AG04450 (cell line): ENCODE measurements at regions of chr3 and their contacts with region 1.

Region 1: DNA sequence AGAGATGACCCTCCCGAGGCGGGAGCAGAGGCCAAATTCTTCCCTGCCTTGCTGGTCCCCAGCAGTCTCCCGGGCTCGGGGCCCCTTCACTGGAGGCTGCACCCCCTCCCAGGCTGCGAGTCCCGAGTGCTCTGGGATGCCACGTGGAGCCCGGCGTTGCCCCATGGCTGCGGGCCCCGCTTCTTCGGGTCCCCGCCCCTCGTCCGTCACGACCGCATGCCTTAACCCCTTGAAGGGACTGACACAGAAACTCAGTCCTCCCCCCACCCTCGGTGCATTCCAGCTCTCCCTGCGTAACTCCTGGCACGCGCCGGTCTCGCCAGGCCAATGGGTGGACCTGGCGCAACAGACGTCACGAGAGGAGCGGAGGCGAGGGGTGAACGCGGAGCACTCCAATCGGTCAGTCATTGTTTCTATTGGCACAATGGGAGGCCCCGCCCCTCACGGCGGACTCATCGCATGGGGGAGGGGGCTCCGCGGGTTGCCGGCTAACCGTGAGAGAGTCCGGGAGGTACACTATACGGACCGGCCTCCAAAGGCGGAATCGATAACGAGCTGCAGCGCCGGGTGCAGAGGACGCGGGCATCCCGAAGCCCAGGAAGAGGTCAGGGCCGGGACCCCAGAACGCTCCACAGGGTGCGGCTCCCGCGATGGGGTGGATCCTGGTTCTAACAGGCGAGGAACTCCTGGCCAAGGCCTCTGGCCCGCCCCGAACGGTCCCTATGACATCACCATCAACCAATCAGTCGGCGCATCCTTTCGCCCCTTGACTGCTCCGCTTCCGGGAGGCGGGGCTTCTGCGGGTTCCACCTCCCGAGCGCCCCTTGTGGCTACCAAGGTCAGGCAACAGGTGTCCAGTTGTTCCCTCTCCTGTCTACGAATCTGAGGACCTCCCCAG is 978 bp upstream of the CELSR3 start:
- DNase-seq: peak; percentile 98
- H3K4me3 ChIP-seq: peak overlapping the region; percentile 66
- H3K27ac ChIP-seq: peak overlapping the region; percentile 98
- H3K27me3 ChIP-seq: peaks cover 9% of the 10 kb centered on the region
- CTCF ChIP-seq: peak; percentile 74

Region 2: GRCh38 chr3:46705022-46705530 is 1958.6 kb before region 1 on chr3:
- CTCF ChIA-PET with region 1: no interaction called
- POLR2A ChIA-PET with region 1: no interaction called
- DNase-seq: peak; percentile 26
- H3K4me3 ChIP-seq: no peak overlapping the region
- H3K27ac ChIP-seq: no peak overlapping the region
- H3K27me3 ChIP-seq: peaks cover 47% of the 10 kb centered on the region
- CTCF ChIP-seq: peak; percentile 96

Region 3: DNA sequence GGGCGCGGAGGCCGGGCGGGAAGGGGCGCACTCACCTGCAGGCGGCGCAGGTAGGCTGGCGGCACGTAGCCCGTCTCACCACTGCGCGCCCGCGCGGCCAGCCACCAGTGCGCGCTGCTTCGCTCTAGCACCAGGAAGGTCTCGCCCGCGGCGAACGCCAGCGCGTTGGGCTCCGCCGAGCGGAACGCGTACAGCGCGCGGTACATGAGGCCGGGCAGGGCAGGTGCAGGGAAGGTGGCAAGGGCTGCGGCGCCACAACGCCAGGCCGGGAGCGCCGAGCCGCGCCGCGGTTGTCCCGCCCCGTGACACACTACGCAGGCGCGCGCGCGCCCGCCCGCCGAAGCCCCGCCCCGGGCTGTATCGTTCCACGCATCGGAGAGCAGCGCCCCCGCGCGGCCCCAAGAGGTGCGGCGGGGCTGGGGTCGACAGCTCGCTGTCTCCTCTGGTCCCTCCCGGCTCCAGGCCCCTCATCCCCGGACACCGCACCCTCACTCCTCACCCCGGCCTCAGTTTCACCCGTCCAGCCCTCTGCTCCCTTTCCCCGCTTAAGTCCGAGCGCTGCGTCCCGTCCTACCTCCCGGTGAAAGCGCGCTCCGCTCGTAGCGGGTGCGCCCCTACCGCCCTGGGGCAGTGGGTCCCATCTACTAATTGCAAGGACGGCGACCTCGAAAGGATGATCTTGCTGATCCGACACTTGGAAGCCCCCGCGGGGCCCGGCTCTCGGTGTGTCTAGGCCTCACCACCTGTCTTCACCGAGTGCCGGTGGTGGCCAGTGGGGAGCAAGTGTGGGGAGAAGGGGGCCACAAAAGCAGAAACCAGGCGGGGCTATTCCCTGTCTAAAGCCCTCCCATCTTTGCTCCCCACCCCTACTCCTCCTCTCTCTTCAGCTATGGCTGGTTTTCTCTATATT is 22.2 kb after region 1 on chr3 and contains the start of gene NCKIPSD:
- CTCF ChIA-PET with region 1: interaction called, 10 read pairs
- POLR2A ChIA-PET with region 1: interaction called, 6 read pairs
- DNase-seq: no peak
- H3K4me3 ChIP-seq: peak within 1 kb of the TSS; percentile 94
- H3K27ac ChIP-seq: peak within 1 kb of the TSS; percentile 21
- H3K27me3 ChIP-seq: no peaks in the 10 kb centered on the region
- CTCF ChIP-seq: peak; percentile 71
- polyA plus RNA-seq, gene NCKIPSD: 25.4 and 36.3 TPM in 2 replicates

Region 4: DNA sequence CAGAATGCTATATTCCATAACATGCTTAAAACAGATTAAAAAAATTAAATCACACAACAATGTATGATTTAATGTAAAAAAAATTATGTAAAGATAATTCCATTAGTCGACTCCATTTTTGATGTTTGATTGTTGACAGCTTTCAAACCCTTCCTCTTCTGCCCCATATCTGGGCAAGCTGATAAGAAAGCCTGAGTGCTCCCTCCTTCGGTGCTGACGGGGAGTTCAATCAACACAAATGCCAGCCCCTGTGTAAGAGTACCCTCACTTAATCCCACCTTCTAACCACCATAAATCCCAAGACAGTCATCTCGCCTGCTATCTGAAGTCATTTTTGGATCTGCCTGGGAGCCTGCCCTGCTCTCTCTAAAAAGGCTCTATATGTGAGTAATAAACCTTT is 113.2 kb after region 1 on chr3:
- CTCF ChIA-PET with region 1: no interaction called
- POLR2A ChIA-PET with region 1: interaction called, 10 read pairs
- DNase-seq: no peak
- H3K4me3 ChIP-seq: no peak overlapping the region
- H3K27ac ChIP-seq: no peak overlapping the region
- H3K27me3 ChIP-seq: no peaks in the 10 kb centered on the region
- CTCF ChIP-seq: no peak